SK-N-SH (cell line): ENCODE measurements at regions of chr20 and their contacts with region 1.

Region 1: GRCh38 chr20:43691928-43692524 is 25.1 kb downstream of the MYBL2 start:
- DNase-seq: peak; percentile 82
- H3K4me3 ChIP-seq: no peak overlapping the region; a peak in 1 of 4 replicates
- H3K27ac ChIP-seq: no peak overlapping the region
- H3K4me1 ChIP-seq: no peaks in the 10 kb centered on the region
- H3K27me3 ChIP-seq: no peaks in the 10 kb centered on the region
- CTCF ChIP-seq: peak; percentile 73
- EP300 ChIP-seq: no peak
- RAD21 ChIP-seq: peak; percentile 72

Region 2: GRCh38 chr20:43448748-43449535 is 243.1 kb before region 1 on chr20:
- CTCF ChIA-PET with region 1: interaction called, 40 read pairs
- POLR2A ChIA-PET with region 1: no interaction called
- DNase-seq: peak; percentile 63
- H3K4me3 ChIP-seq: no peak overlapping the region; a peak in 1 of 4 replicates
- H3K27ac ChIP-seq: peak overlapping the region in 1 of 2 experiments; percentile 79; a peak in 2 of 4 replicates
- H3K4me1 ChIP-seq: peaks cover 0 to 17% of the 10 kb centered on the region in 2 experiments; a peak in 1 of 4 replicates
- H3K27me3 ChIP-seq: no peaks in the 10 kb centered on the region
- CTCF ChIP-seq: peak; percentile 78
- EP300 ChIP-seq: peak in 1 of 2 experiments; percentile 60; a peak in 1 of 4 replicates
- RAD21 ChIP-seq: peak; percentile 91

Region 3: GRCh38 chr20:43681468-43681942 is 10.5 kb before region 1 on chr20:
- CTCF ChIA-PET with region 1: interaction called, 29 read pairs
- POLR2A ChIA-PET with region 1: no interaction called
- DNase-seq: no peak
- H3K4me3 ChIP-seq: no peak overlapping the region
- H3K27ac ChIP-seq: no peak overlapping the region
- H3K4me1 ChIP-seq: no peaks in the 10 kb centered on the region
- H3K27me3 ChIP-seq: no peaks in the 10 kb centered on the region
- CTCF ChIP-seq: peak; percentile 26; the same call in 1 of the 2 replicates
- EP300 ChIP-seq: no peak
- RAD21 ChIP-seq: no peak

Region 4: DNA sequence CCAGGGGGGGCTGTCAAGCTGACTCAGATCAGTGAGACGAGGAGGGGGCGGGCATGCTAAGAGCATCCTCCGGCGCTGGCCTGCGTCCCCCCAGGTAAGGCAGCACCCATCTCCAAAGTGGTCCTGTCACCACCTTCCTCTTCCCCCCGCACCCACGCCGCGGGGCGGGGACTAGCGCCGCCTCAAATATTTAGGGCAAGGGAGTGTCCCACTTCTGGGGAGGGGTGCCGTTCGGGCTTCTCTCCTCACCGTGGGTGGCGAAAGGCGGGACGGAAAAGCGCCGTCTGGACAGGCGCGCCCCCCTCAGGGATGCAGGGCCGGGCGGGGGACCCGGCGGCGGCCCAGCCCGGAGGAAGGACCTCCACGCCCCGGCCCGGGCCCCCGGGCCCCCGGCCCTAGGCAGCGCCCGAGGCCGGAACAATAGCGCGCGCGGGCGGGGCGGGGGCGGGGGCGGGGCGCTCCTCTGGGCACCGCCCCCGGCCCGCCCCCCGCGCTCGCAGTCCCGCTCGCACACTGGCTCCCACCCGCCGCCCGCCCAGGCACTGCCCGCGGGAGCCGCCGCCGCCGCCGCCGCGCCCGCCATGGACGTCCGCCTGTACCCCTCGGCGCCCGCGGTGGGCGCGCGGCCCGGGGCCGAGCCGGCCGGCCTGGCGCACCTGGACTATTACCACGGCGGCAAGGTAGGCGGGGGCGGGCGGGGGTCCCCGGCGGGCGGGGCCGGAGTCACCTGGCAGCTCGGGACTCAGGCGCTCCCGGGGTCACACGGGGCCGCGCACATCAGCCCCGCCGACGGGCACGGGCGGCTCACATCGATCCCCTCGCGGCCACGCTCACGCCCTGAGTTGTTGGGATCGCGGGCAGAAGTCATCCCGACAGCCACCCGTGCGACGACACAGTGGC is 222.5 kb after region 1 on chr20 and contains the start of gene TOX2:
- CTCF ChIA-PET with region 1: no interaction called
- POLR2A ChIA-PET with region 1: no interaction called
- DNase-seq: peak; percentile 96
- H3K4me3 ChIP-seq: peak within 1 kb of the TSS; percentile 60 to 65
- H3K27ac ChIP-seq: no peak within 1 kb of the TSS; a peak in 1 of 4 replicates
- H3K4me1 ChIP-seq: peaks cover 0 to 27% of the 10 kb centered on the region in 2 experiments; a peak in 1 of 4 replicates
- H3K27me3 ChIP-seq: no peaks in the 10 kb centered on the region
- CTCF ChIP-seq: no peak
- EP300 ChIP-seq: no peak
- RAD21 ChIP-seq: no peak
- polyA plus RNA-seq, gene TOX2: 6.1 and 15.4 TPM in 2 replicates